CD8-positive, alpha-beta T cell (primary cell): ENCODE measurements at regions of chr1 and their contacts with region 1.

Region 1: DNA sequence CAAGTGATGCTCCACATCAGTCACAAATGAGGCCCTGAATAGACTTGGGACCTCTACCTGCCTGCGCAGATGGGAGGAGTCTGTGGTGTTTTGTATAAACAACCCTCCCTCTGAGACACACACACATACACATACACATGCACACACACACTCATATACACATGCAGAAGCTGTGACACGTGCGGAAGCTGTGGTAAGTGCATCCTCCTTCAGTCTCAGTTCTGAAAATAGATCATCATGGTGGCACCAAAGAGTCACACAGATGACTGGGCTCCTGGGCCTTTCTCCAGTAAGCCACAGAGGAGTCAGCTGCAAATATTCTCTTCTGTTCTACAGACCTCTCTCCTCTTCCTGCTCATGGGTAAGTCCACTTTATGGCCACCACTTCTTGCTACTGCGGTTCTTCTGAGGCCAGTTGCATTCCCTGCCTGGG is at the start of gene LY9:
- DNase-seq: peak; percentile 65 to 97 (median 77)
- ATAC-seq: peak; percentile 90
- H3K4me3 ChIP-seq: peak within 1 kb of the TSS; percentile 71 to 74
- H3K4me3 Mint-ChIP-seq: peak within 1 kb of the TSS; percentile 97
- H3K27ac ChIP-seq: peak within 1 kb of the TSS; percentile 75 to 85
- H3K27ac Mint-ChIP-seq: peak within 1 kb of the TSS; percentile 99
- H3K4me1 ChIP-seq: peaks cover 30% of the 10 kb centered on the region
- H3K4me1 Mint-ChIP-seq: peaks cover 54% of the 10 kb centered on the region
- H3K27me3 ChIP-seq: no peaks in the 10 kb centered on the region
- H3K27me3 Mint-ChIP-seq: no peaks in the 10 kb centered on the region
- CTCF ChIP-seq: no peak
- total RNA-seq, gene LY9: 103 to 104 TPM

Region 2: DNA sequence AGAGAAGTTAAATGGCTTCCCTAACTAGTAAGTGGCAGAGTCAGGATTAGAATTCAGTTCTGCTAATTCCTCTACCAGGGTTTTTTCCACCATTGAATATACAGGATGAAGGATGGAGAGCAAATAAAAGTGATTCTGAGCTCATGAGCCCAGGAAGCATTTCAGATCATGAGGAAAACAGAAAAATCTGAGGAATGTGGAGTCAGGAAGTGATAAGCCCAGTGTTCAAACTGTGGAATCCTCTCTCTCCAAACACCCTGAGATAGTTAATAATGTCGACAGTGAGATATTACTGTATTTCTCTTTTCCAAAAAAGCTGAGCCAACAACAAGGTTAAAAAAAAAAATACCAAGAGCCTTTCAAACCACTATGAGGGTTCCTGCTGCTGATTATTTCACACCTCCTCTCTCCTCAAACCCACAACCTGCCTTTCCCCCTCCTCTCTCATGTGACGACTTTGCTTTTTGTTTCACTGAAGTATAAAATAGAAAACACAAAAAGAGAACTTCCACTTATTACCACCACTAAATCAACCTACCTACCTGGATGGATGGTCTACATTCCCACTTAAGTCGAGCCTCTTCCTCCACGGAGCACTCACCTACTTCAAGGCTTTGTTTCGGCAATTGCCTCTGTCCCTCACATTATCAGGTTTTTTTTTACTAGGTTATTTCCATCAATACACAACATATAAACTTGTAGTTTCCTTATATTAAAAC is 158.0 kb before region 1 on chr1:
- CTCF ChIA-PET with region 1: no interaction called
- POLR2A ChIA-PET with region 1: no interaction called
- intact Hi-C with region 1: loop called in 1 of 2 experiments (anchors 2 kb)
- DNase-seq: peak in 7 of 9 experiments; percentile 39 to 91 (median 62)
- ATAC-seq: peak; percentile 69
- H3K4me3 ChIP-seq: peak overlapping the region; percentile 9 to 18
- H3K4me3 Mint-ChIP-seq: peak overlapping the region; percentile 78
- H3K27ac ChIP-seq: peak overlapping the region; percentile 20 to 69
- H3K27ac Mint-ChIP-seq: peak overlapping the region; percentile 95
- H3K4me1 ChIP-seq: peaks cover 91% of the 10 kb centered on the region
- H3K4me1 Mint-ChIP-seq: peaks cover 96% of the 10 kb centered on the region
- H3K27me3 ChIP-seq: no peaks in the 10 kb centered on the region
- H3K27me3 Mint-ChIP-seq: no peaks in the 10 kb centered on the region
- CTCF ChIP-seq: no peak

Region 3: GRCh38 chr1:160777486-160778089 is 18.4 kb before region 1 on chr1:
- CTCF ChIA-PET with region 1: interaction called, 26 read pairs
- POLR2A ChIA-PET with region 1: interaction called, 13 read pairs
- intact Hi-C with region 1: loop called in 1 of 2 experiments (anchors 2 kb)
- DNase-seq: peak in 7 of 9 experiments; percentile 33 to 79 (median 52)
- ATAC-seq: peak; percentile 84
- H3K4me3 ChIP-seq: no peak overlapping the region
- H3K4me3 Mint-ChIP-seq: no peak overlapping the region
- H3K27ac ChIP-seq: no peak overlapping the region
- H3K27ac Mint-ChIP-seq: no peak overlapping the region
- H3K4me1 ChIP-seq: no peaks in the 10 kb centered on the region
- H3K4me1 Mint-ChIP-seq: peaks cover 20% of the 10 kb centered on the region
- H3K27me3 ChIP-seq: no peaks in the 10 kb centered on the region
- H3K27me3 Mint-ChIP-seq: no peaks in the 10 kb centered on the region
- CTCF ChIP-seq: peak; percentile 77

Region 4: GRCh38 chr1:160806109-160806665 is 10.2 kb after region 1 on chr1:
- CTCF ChIA-PET with region 1: interaction called, 7 read pairs
- POLR2A ChIA-PET with region 1: interaction called, 18 read pairs
- intact Hi-C with region 1: loop called in 1 of 2 experiments (anchors 1 kb)
- DNase-seq: peak in 2 of 9 experiments; percentile 35 to 50
- ATAC-seq: peak; percentile 70
- H3K4me3 ChIP-seq: no peak overlapping the region
- H3K4me3 Mint-ChIP-seq: no peak overlapping the region
- H3K27ac ChIP-seq: no peak overlapping the region
- H3K27ac Mint-ChIP-seq: peak overlapping the region; percentile 80
- H3K4me1 ChIP-seq: peaks cover 68% of the 10 kb centered on the region
- H3K4me1 Mint-ChIP-seq: peaks cover 85% of the 10 kb centered on the region
- H3K27me3 ChIP-seq: no peaks in the 10 kb centered on the region
- H3K27me3 Mint-ChIP-seq: no peaks in the 10 kb centered on the region
- CTCF ChIP-seq: no peak

Region 5: GRCh38 chr1:160813215-160813614 is 17.2 kb after region 1 on chr1:
- CTCF ChIA-PET with region 1: interaction called, 7 read pairs
- POLR2A ChIA-PET with region 1: interaction called, 18 read pairs
- intact Hi-C with region 1: loop called in 1 of 2 experiments (anchors 1 kb)
- DNase-seq: no peak
- ATAC-seq: peak; percentile 77
- H3K4me3 ChIP-seq: no peak overlapping the region
- H3K4me3 Mint-ChIP-seq: no peak overlapping the region
- H3K27ac ChIP-seq: no peak overlapping the region
- H3K27ac Mint-ChIP-seq: peak overlapping the region; percentile 84
- H3K4me1 ChIP-seq: peaks cover 17% of the 10 kb centered on the region
- H3K4me1 Mint-ChIP-seq: peaks cover 52% of the 10 kb centered on the region
- H3K27me3 ChIP-seq: no peaks in the 10 kb centered on the region
- H3K27me3 Mint-ChIP-seq: no peaks in the 10 kb centered on the region
- CTCF ChIP-seq: no peak

Region 6: GRCh38 chr1:160830321-160831153 is 34.6 kb after region 1 on chr1:
- CTCF ChIA-PET with region 1: interaction called, 69 read pairs
- POLR2A ChIA-PET with region 1: interaction called, 17 read pairs
- intact Hi-C with region 1: loop called (anchors 1 to 5 kb)
- DNase-seq: peak; percentile 52 to 87 (median 80)
- ATAC-seq: peak; percentile 70
- H3K4me3 ChIP-seq: no peak overlapping the region
- H3K4me3 Mint-ChIP-seq: no peak overlapping the region
- H3K27ac ChIP-seq: peak overlapping the region in 1 of 2 experiments; percentile 15
- H3K27ac Mint-ChIP-seq: peak overlapping the region; percentile 86
- H3K4me1 ChIP-seq: peaks cover 25% of the 10 kb centered on the region
- H3K4me1 Mint-ChIP-seq: peaks cover 58% of the 10 kb centered on the region
- H3K27me3 ChIP-seq: no peaks in the 10 kb centered on the region
- H3K27me3 Mint-ChIP-seq: no peaks in the 10 kb centered on the region
- CTCF ChIP-seq: peak; percentile 73

Region 7: GRCh38 chr1:160997323-160998038 is 201.5 kb after region 1 on chr1:
- CTCF ChIA-PET with region 1: no interaction called
- POLR2A ChIA-PET with region 1: no interaction called
- intact Hi-C with region 1: no loop called
- DNase-seq: peak in 8 of 9 experiments; percentile 37 to 71 (median 56)
- ATAC-seq: peak; percentile 82
- H3K4me3 ChIP-seq: no peak overlapping the region
- H3K4me3 Mint-ChIP-seq: no peak overlapping the region
- H3K27ac ChIP-seq: no peak overlapping the region
- H3K27ac Mint-ChIP-seq: peak overlapping the region; percentile 29
- H3K4me1 ChIP-seq: no peaks in the 10 kb centered on the region
- H3K4me1 Mint-ChIP-seq: peaks cover 5% of the 10 kb centered on the region
- H3K27me3 ChIP-seq: no peaks in the 10 kb centered on the region
- H3K27me3 Mint-ChIP-seq: no peaks in the 10 kb centered on the region
- CTCF ChIP-seq: peak; percentile 30